Caco-2 (cell line): ENCODE measurements at regions of chr1 and their contacts with region 1.

Region 1: DNA sequence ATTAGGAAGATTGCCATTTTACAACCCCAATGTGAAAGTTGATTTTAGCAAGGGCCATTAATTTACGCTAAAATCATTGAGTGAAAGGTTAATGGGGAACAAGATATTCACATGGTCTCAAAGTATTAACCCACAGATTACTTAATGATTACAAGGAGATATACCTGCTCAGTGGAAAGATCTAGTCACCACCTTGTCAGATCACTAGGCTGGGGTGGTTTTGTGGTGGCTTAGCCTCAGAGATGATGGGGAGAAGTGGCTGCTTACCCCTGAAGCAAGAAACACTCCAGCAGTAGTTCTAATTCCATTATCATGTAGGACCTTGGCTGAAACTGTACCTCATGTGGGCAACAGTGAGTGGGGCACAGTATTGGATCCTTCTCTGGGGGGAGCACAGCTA is 20.1 kb upstream of the TRIM33 start:
- DNase-seq: no peak
- H3K4me3 ChIP-seq: no peak overlapping the region
- H3K4me3 Mint-ChIP-seq: no peak overlapping the region
- H3K27ac Mint-ChIP-seq: no peak overlapping the region
- H3K4me1 ChIP-seq: peaks cover 14% of the 10 kb centered on the region
- H3K4me1 Mint-ChIP-seq: peaks cover 7% of the 10 kb centered on the region
- H3K27me3 ChIP-seq: no peaks in the 10 kb centered on the region
- H3K27me3 Mint-ChIP-seq: no peaks in the 10 kb centered on the region
- CTCF ChIP-seq: no peak

Region 2: DNA sequence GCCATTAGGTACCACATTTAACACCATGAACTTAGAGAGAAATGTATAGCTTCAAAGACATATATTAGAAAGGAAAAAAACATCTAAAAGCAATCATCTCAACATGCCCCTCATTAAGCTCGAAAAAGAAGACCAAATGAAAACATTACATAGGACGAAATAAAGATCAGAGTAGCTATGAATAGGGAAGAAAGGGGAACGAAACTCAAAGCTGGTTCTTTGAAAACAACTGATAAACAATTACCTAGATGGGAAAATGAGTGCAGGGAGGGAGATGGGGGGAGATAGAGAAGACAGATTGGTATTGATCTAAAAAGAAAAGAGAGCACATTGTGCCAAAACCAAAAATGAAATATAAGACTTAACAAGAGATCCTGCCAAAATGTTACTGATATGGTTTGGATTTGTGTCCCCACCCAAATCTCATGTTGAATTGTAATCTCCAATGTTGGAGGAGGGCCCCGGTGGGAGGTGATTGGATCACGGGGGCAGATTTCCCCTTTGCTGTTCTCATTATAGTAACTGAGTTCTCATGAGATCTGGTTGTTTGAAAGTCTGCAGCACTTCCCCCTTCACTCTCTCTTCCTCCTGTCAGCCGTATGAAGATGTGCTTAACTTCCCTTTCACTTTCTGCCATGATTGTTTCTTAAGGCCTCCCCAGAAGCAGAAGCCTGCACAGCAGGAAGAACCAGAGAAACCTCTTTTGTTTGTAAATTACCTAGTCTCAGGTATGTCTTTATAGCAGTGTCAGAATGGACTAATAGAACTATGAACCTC is 48.7 kb before region 1 on chr1:
- CTCF ChIA-PET with region 1: interaction called, 4 read pairs
- POLR2A ChIA-PET with region 1: no interaction called
- intact Hi-C with region 1: loop called (anchors 2 kb)
- DNase-seq: peak in 1 of 2 experiments; percentile 19
- H3K4me3 ChIP-seq: no peak overlapping the region
- H3K4me3 Mint-ChIP-seq: no peak overlapping the region
- H3K27ac Mint-ChIP-seq: no peak overlapping the region
- H3K4me1 ChIP-seq: no peaks in the 10 kb centered on the region
- H3K4me1 Mint-ChIP-seq: peaks cover 13% of the 10 kb centered on the region
- H3K27me3 ChIP-seq: no peaks in the 10 kb centered on the region
- H3K27me3 Mint-ChIP-seq: no peaks in the 10 kb centered on the region
- CTCF ChIP-seq: no peak